ENCODE measurements at regions of chr2 and their contacts with region 1.

Region 1: GRCh38 chr2:218395797-218396687 is 3.6 kb upstream of the CTDSP1 start:
- DNase-seq: peak; percentile 96
- H3K4me3 Mint-ChIP-seq: peak overlapping the region; percentile 90
- H3K27ac Mint-ChIP-seq: peak overlapping the region; percentile 88
- H3K4me1 Mint-ChIP-seq: peaks cover 34% of the 10 kb centered on the region
- H3K27me3 Mint-ChIP-seq: no peaks in the 10 kb centered on the region

Region 2: DNA sequence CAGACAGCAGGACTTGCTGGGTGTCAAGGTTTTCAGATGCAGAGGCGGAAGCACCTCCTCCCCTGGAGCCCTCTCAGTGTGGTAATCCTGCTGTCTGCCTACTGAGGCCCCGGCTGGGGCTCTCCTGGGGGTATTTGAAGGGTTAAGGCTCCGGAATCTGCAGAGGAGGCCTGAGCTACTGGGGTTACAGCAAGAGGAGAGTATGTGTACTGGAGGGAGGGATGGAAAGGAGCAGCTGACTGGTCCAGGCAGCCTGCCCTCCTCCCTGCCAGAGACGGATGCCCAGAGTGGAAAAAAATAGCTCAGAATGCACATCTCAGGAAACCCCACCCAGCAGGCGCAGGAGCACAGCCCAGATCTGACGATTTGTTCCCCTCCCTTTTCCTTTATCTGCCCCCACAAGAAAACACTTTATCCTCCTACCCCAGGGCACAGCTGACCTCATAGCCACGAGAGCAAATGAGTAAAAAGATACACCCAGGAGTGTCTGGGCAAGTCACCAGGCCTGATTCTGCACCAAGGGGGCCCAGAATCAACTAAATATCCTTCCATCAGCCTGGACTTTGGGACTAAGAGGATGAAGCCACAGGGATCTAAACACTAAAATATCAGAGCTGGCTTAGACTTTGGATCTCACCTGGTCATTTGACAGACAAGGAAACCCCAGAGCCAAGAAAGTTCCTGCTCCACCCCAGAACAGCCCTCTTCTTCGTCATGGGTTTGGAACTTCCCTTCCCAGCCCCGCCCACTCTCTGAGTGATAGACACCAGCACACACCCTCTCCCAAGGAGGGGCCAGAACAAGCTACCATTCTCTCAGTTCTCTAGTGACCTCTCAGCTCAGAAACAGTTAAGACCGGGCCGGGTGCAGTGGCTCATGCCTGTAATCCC is 109.2 kb before region 1 on chr2:
- CTCF ChIA-PET with region 1: interaction called, 10 read pairs
- POLR2A ChIA-PET with region 1: interaction called, 10 read pairs
- intact Hi-C with region 1: loop called (anchors 1 kb)
- DNase-seq: peak; percentile 92
- H3K4me3 Mint-ChIP-seq: peak overlapping the region; percentile 82
- H3K27ac Mint-ChIP-seq: peak overlapping the region; percentile 98
- H3K4me1 Mint-ChIP-seq: peaks cover 81% of the 10 kb centered on the region
- H3K27me3 Mint-ChIP-seq: no peaks in the 10 kb centered on the region

Region 3: DNA sequence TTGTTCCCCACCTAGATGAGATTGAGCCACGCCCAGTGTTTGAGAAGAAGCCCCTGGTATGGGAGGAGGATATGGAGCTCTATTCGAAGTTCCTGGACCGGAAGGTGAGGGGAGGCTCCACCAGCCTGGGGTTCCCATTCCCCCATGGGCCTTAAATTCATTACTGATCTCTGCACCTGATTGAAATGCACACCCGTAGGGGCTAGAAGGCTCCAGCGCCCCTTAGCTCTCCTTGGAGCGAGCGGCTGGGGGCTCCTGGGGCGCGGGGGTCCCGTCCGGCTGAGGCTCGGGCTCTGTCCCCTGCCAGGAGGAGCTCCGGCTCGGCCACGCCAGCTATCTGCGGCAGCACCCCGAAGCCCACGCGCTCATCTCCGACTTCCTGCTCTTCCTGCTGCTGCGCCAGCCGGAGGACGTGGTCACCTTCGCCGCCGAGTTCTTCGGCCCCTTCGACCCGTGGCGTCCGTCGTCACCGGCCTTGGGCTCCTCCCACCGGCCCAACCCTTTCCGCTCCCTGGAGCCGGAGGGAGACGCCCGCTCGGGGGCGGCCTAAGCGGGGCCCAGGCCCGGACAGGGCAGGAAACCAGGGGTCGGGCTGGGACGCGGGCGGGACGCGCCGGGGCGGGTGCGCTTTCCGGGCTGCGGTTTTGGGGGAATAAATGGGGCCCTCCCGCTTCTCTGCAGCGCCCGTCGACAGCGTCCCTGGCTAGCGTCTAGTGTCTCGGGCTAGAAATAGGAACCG is 28.5 kb before region 1 on chr2:
- CTCF ChIA-PET with region 1: no interaction called
- POLR2A ChIA-PET with region 1: no interaction called
- intact Hi-C with region 1: loop called (anchors 1 kb)
- DNase-seq: peak; percentile 86
- H3K4me3 Mint-ChIP-seq: peak overlapping the region; percentile 78
- H3K27ac Mint-ChIP-seq: peak overlapping the region; percentile 71
- H3K4me1 Mint-ChIP-seq: peaks cover 8% of the 10 kb centered on the region
- H3K27me3 Mint-ChIP-seq: no peaks in the 10 kb centered on the region

Region 4: DNA sequence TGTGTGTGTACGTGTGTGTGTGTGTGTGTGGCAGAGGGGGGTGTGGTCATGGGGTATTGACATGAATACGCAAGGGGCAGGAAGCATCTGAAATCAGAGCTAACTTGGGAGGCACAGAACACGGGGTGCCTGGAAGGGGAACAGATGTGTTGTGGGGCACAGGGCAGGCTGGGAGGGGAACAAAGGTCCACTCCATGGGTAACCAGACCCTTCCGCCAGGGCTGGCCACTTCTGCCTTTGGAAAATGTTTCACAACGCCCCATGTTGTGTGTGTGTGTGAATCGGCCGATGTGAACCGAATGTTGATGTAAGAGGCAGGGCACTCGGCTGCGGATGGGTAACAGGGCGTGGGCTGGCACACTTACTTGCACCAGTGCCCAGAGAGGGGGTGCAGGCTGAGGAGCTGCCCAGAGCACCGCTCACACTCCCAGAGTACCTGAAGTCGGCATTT is 14.1 kb before region 1 on chr2 and contains the start of gene SLC11A1:
- CTCF ChIA-PET with region 1: no interaction called
- POLR2A ChIA-PET with region 1: no interaction called
- intact Hi-C with region 1: no loop called
- DNase-seq: no peak
- H3K4me3 Mint-ChIP-seq: no peak within 1 kb of the TSS
- H3K27ac Mint-ChIP-seq: no peak within 1 kb of the TSS
- H3K4me1 Mint-ChIP-seq: no peaks in the 10 kb centered on the region
- H3K27me3 Mint-ChIP-seq: peaks cover 2% of the 10 kb centered on the region
- total RNA-seq, gene SLC11A1: 0.10 to 0.26 TPM

Region 5: GRCh38 chr2:218659258-218659987 is 263.4 kb after region 1 on chr2 and contains the starts of genes BCS1L and ZNF142:
- CTCF ChIA-PET with region 1: interaction called, 3 read pairs
- POLR2A ChIA-PET with region 1: interaction called, 3 read pairs
- intact Hi-C with region 1: loop called (anchors 2 kb)
- DNase-seq: peak; percentile 98
- H3K4me3 Mint-ChIP-seq: peak within 1 kb of the TSS; percentile 93
- H3K27ac Mint-ChIP-seq: peak within 1 kb of the TSS; percentile 80
- H3K4me1 Mint-ChIP-seq: peaks cover 26% of the 10 kb centered on the region
- H3K27me3 Mint-ChIP-seq: no peaks in the 10 kb centered on the region
- total RNA-seq, gene BCS1L: 57.1 to 64.5 TPM
- total RNA-seq, gene ZNF142: 33.7 to 34.8 TPM

Region 6: DNA sequence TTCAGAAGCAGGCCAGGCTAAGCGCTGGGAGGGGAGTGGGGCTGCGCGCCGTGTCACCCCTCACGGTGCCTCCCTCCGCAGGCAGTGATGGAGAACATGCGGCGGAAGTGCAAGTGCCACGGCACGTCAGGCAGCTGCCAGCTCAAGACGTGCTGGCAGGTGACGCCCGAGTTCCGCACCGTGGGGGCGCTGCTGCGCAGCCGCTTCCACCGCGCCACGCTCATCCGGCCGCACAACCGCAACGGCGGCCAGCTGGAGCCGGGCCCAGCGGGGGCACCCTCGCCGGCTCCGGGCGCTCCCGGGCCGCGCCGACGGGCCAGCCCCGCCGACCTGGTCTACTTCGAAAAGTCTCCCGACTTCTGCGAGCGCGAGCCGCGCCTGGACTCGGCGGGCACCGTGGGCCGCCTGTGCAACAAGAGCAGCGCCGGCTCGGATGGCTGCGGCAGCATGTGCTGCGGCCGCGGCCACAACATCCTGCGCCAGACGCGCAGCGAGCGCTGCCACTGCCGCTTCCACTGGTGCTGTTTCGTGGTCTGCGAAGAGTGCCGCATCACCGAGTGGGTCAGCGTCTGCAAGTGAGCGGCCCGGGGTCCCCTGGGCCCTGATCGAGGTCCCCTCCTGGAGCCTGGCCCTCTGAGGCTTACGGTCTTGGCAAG is 496.8 kb after region 1 on chr2:
- CTCF ChIA-PET with region 1: no interaction called
- POLR2A ChIA-PET with region 1: no interaction called
- intact Hi-C with region 1: loop called (anchors 2 kb)
- DNase-seq: peak; percentile 91
- H3K4me3 Mint-ChIP-seq: peak overlapping the region; percentile 77
- H3K27ac Mint-ChIP-seq: peak overlapping the region; percentile 90
- H3K4me1 Mint-ChIP-seq: peaks cover 52% of the 10 kb centered on the region
- H3K27me3 Mint-ChIP-seq: no peaks in the 10 kb centered on the region